A549 (cell line): ENCODE measurements at regions of chr2 and their contacts with region 1.

Region 1: GRCh38 chr2:11738589-11739436 is 7.6 kb upstream of the LPIN1 start:
- DNase-seq: peak; percentile 40 to 67
- ATAC-seq: peak; percentile 91 to 95
- H3K4me3 ChIP-seq: no peak overlapping the region
- H3K27ac ChIP-seq: peak overlapping the region; percentile 4 to 66; a peak in 4 of 6 replicates
- H3K4me1 ChIP-seq: peaks cover 27% of the 10 kb centered on the region
- CTCF ChIP-seq: peak; percentile 49
- EP300 ChIP-seq: no peak
- POLR2A ChIP-seq: no peak
- RAD21 ChIP-seq: peak; percentile 54 to 72

Region 2: DNA sequence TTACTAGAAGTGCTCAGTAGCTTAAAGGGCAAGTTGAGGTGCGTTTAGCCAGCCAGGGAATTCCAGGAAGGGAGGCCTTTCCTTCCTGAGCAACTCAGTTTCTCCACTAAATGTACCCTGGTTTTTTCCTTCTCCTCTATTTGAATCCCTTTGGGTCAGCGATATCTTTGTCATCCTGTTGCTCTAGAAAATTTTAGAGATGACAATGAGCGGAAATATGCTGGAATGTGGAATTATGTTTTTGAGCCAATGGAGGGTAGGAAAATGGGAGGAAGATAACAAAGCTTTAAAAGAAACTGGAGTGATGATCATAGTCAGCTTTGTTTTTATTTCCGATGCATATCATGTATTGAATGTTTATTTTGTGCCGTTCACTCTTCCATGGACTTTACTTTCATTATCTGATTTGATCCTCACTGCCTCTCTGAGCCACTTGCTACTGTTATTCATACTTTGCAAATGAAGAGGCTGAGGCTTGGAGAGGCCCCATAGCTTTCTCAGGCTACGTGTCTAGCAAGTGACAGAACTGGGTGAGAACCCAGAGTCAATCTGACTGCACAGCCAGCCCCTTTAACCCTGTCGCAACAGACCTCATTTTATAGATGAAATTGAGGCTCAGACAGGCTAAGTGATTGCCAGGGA is 136.1 kb before region 1 on chr2:
- CTCF ChIA-PET with region 1: no interaction called
- POLR2A ChIA-PET with region 1: no interaction called
- DNase-seq: no peak
- ATAC-seq: no peak
- H3K4me3 ChIP-seq: no peak overlapping the region
- H3K27ac ChIP-seq: no peak overlapping the region
- H3K4me1 ChIP-seq: no peaks in the 10 kb centered on the region
- CTCF ChIP-seq: no peak
- EP300 ChIP-seq: no peak
- POLR2A ChIP-seq: no peak
- RAD21 ChIP-seq: no peak

Region 3: GRCh38 chr2:11764359-11764758 is 25.5 kb after region 1 on chr2:
- CTCF ChIA-PET with region 1: interaction called, 15 read pairs
- POLR2A ChIA-PET with region 1: no interaction called
- DNase-seq: no peak
- ATAC-seq: no peak
- H3K4me3 ChIP-seq: no peak overlapping the region
- H3K27ac ChIP-seq: no peak overlapping the region
- H3K4me1 ChIP-seq: peaks cover 5% of the 10 kb centered on the region; the same call in 1 of the 3 replicates
- CTCF ChIP-seq: no peak
- EP300 ChIP-seq: no peak
- POLR2A ChIP-seq: no peak
- RAD21 ChIP-seq: no peak